Breast epithelium (tissue), 4 donors: ENCODE measurements at regions of chr7 and their contacts with region 1.

Region 1: DNA sequence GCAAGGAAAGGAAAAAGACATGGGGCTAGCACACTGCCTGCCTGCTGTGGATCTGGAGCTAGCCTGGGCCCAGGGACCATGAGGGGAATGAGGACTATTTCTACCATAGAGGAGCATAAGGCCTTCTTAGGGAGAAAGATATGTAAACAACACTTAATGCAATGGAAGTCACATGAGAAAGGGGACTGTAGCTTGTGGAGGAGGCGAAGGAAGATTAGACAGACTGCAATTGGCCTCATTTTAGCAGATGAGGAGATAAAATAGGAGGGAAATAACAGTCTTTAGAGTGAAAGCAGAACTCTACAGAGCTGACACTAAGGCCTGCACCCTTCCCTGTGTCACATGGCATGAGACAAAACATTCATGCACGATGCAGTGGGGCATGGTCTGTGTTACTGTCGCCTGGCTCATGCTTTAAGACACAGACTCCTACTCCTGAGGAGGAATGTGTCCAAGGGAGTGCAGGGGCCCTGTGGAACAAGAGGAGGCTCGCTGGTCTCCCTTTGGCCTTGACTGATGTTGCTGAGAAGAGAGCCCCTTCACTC is 829.3 kb upstream of the IGFBP3 start:
- DNase-seq: no peak
- H3K4me3 ChIP-seq: no peak overlapping the region
- H3K27ac ChIP-seq: no peak overlapping the region
- H3K4me1 ChIP-seq: no peaks in the 10 kb centered on the region
- H3K27me3 ChIP-seq: no peaks in the 10 kb centered on the region
- CTCF ChIP-seq: no peak
- POLR2A ChIP-seq: no peak

Region 2: GRCh38 chr7:46369933-46370654 is 380.3 kb before region 1 on chr7:
- intact Hi-C with region 1: no loop called
- DNase-seq: no peak
- H3K4me3 ChIP-seq: no peak overlapping the region
- H3K27ac ChIP-seq: no peak overlapping the region
- H3K4me1 ChIP-seq: no peaks in the 10 kb centered on the region
- H3K27me3 ChIP-seq: no peaks in the 10 kb centered on the region
- CTCF ChIP-seq: no peak
- POLR2A ChIP-seq: no peak

Region 3: GRCh38 chr7:46695051-46695707 is 55.2 kb before region 1 on chr7:
- intact Hi-C with region 1: loop called (anchors 2 kb)
- DNase-seq: no peak
- H3K4me3 ChIP-seq: no peak overlapping the region
- H3K27ac ChIP-seq: no peak overlapping the region
- H3K4me1 ChIP-seq: no peaks in the 10 kb centered on the region
- H3K27me3 ChIP-seq: no peaks in the 10 kb centered on the region
- CTCF ChIP-seq: no peak
- POLR2A ChIP-seq: no peak

Region 4: DNA sequence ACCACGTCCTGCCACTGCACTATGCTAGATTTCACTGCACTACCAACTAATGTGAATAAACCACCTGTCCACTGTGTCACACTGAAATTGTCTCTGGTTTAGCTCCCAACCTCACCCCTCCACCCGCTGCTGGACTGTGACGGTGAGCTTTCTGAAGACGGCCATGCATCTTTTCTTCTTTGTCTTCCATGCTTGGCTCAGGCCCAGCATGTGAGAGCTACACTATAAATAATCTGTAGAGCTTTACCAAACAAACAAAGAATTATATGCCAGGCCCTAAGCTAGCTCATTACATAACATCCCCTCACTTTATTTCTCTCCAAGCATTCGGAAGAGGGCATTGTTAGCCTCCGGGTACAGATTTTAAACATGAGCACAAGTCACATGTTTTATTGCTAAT is 198.3 kb after region 1 on chr7:
- intact Hi-C with region 1: no loop called
- DNase-seq: no peak
- H3K4me3 ChIP-seq: no peak overlapping the region
- H3K27ac ChIP-seq: no peak overlapping the region
- H3K4me1 ChIP-seq: no peaks in the 10 kb centered on the region
- H3K27me3 ChIP-seq: no peaks in the 10 kb centered on the region
- CTCF ChIP-seq: no peak
- POLR2A ChIP-seq: no peak